Activated CD4-positive, alpha-beta memory T cell treated with anti-CD3 and anti-CD28 coated beads for 36 hours (primary cell): ENCODE measurements at regions of chr7 and their contacts with region 1.

Region 1: GRCh38 chr7:105024743-105025142 is 10.7 kb downstream of the KMT2E start:
- DNase-seq: no peak
- H3K4me3 Mint-ChIP-seq: no peak overlapping the region
- H3K27ac Mint-ChIP-seq: peak overlapping the region; percentile 56
- H3K4me1 Mint-ChIP-seq: peaks cover 85% of the 10 kb centered on the region
- H3K27me3 Mint-ChIP-seq: no peaks in the 10 kb centered on the region

Region 2: DNA sequence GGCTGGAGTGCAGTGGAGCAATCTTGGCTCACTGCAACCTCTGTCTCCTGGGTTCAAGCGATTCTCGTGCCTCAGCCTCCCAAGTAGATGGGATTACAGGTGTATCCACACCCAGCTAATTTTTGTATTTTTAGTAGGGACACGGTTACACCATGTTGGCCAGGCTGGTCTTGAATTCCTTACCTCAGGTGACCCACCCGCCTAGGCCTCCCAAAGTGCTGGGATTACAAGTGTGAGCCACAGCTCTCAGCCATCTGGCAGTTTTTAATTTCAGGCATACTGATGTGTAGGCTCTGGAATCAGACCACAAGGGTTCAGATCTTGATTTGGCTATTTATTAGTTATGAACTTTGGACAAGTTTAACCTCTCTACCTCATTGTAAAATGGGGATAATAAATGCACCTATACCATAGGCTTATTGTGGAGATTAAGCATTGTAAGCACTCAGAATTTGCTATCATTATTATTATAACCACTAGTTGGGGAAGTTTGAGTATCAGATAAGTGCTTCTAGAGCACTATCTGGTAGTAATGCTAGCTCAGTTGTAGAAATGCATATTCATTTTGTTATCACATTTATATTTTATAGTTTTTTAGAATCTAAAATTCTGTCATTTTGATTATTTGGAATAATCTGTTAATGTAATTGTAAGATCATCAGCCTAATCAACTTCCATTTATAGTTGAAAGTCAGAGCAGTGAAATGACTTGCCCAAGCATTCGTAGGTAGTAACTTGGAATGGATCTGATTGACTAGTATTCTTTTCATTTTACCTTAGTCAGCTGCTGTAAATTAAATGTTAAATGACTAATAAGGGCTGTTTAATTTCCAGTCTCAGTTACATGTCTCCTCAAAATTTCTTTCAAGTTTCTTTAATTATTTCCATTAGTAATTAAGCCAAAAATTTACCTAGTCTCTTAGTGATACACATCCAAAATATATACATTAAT is 11.8 kb after region 1 on chr7:
- CTCF ChIA-PET with region 1: no interaction called
- POLR2A ChIA-PET with region 1: interaction called, 3 read pairs
- intact Hi-C with region 1: loop called (anchors 2 kb)
- DNase-seq: no peak
- H3K4me3 Mint-ChIP-seq: no peak overlapping the region
- H3K27ac Mint-ChIP-seq: peak overlapping the region; percentile 54
- H3K4me1 Mint-ChIP-seq: peaks cover 56% of the 10 kb centered on the region
- H3K27me3 Mint-ChIP-seq: no peaks in the 10 kb centered on the region

Region 3: DNA sequence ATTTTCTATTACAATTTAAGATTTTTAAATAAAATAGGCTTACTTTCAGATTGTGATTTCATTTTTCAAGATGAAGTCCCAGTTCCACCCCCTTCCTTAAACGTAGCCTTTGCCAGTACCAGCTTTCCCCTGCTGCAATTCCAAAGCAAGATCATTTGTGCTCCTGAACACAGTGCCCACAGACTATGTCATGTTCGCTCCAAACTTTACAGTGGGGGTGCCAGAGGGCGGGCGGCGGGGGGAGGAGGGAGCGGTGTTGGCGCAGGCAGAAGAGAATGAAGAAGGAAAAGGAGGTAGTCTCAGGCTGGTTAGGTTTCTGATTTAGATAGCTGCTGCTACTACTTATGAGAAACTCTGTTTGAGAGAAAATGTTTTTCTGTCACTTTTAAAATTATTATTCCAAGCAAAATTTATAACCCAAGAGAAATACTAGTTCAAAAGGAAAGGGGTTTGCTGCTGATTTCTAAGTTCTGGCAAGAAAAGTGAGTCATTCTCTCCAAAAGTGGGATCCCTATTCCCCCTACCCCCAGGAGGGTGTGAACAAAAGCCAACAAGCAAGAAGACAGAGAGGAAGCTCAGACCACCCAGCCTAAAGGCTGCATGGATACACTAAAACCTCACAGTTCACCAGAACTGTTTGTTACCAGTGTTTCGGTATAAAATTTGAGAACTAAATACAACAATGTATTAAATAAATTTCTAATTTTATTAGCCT is 254.4 kb after region 1 on chr7:
- CTCF ChIA-PET with region 1: no interaction called
- POLR2A ChIA-PET with region 1: no interaction called
- intact Hi-C with region 1: no loop called
- DNase-seq: no peak
- H3K4me3 Mint-ChIP-seq: no peak overlapping the region
- H3K27ac Mint-ChIP-seq: no peak overlapping the region
- H3K4me1 Mint-ChIP-seq: peaks cover 32% of the 10 kb centered on the region
- H3K27me3 Mint-ChIP-seq: no peaks in the 10 kb centered on the region